ENCODE measurements at regions of chr5 and their contacts with region 1.

Region 1: DNA sequence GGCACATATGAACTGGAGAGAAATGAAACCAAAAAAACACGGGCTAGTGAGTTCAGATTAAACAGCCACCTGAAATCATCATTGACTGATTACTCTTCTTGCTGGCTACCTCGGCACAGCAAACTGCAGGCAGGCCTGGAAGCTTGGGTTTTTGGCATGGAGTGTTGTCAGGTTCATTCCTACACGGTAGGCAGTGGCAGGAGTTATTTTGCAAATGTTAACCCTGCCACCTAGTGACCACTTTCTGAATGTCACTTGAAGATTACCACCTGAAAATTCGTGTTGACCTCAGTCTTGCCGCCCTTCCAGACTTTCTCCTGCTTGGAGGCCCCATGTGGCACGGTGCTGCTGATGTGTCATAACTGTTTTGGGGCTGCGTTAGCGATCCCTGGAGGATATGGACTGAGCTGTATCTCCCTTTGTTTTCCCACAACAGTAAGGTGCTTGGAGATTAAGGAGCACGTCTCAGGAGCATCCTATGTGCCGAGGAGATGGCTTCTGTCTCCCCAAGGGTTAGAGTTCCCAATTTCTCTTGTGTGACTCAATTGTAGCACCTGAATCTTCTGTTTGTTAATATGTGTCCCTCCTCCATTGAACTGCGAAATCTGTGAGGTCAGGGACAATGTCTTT is 12.7 kb upstream of the CD180 start:
- DNase-seq: peak in 6 of 10 donors; percentile 51 to 79 (median 58)
- H3K4me3 ChIP-seq: peak overlapping the region in 9 of 59 donors; percentile 1 to 31 (median 11)
- H3K27ac ChIP-seq: no peak overlapping the region
- H3K27me3 ChIP-seq: no peaks in the 10 kb centered on the region
- CTCF ChIP-seq: peak; percentile 73 to 99 (median 91)

Region 2: DNA sequence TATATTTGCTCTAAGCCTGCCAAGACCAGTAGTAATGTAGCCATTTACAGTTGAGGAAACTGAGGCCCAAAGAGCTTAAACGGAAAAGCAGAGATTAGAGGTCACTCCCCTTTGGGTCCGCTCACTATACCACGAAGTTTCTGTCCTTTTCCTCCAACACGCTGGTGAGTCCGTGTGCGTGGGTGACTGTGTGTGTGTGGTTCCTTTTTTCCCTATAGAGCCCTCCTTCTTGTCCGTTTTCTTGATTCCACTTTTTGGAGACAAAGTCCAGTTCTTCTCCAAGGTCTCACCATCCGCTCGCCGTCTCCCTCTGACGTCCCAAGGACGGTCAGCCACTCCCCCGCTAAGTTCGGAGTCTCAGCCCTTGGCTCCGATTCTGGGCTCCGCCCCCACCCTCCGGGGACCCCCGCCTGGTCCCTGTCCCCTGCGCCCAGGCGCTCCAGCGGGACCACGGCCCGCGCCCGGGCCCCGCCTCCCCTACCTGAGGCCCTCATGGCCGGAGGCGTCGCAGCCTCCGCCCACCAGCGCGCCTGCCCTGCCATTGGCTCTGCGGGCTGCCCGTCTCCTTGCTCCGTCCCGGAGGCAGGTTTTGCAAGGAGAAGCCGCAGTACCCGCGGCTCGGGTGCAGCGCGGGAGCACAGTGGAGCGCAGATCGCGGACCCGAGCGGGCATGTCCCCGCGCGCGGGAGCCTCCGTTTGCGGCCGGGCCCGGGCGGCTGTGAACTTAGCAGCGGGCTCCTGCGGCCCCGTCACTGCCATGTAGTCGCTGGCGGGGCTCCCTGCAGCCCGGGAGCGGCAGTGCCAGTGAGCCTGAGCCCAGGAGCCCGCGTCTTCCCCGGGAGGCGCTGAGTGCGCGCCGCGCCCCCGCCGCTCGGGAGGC is 613.3 kb before region 1 on chr5 and contains the start of gene MAST4:
- intact Hi-C with region 1: loop called in 1 of 2 experiments (anchors 5 kb)
- DNase-seq: peak; percentile 44 to 93 (median 82)
- H3K4me3 ChIP-seq: peak within 1 kb of the TSS; percentile 48 to 84 (median 76)
- H3K27ac ChIP-seq: peak within 1 kb of the TSS in 48 of 59 donors; percentile 24 to 90 (median 73)
- H3K27me3 ChIP-seq: peaks cover 0 to 13% (median 0%) of the 10 kb centered on the region in 45 donors
- CTCF ChIP-seq: peak in 1 of 56 donors; percentile 3
- total RNA-seq, gene MAST4: 32.2 to 102 (median 69.2) TPM

Region 3: GRCh38 chr5:66807743-66808142 is 401.5 kb before region 1 on chr5:
- intact Hi-C with region 1: loop called (anchors 2 to 10 kb)
- DNase-seq: peak in 4 of 10 donors; percentile 10 to 70 (median 36)
- H3K4me3 ChIP-seq: peak overlapping the region in 1 of 59 donors; percentile 11
- H3K27ac ChIP-seq: peak overlapping the region in 7 of 59 donors; percentile 3 to 62 (median 10)
- H3K27me3 ChIP-seq: no peaks in the 10 kb centered on the region
- CTCF ChIP-seq: peak; percentile 19 to 77 (median 59)

Region 4: DNA sequence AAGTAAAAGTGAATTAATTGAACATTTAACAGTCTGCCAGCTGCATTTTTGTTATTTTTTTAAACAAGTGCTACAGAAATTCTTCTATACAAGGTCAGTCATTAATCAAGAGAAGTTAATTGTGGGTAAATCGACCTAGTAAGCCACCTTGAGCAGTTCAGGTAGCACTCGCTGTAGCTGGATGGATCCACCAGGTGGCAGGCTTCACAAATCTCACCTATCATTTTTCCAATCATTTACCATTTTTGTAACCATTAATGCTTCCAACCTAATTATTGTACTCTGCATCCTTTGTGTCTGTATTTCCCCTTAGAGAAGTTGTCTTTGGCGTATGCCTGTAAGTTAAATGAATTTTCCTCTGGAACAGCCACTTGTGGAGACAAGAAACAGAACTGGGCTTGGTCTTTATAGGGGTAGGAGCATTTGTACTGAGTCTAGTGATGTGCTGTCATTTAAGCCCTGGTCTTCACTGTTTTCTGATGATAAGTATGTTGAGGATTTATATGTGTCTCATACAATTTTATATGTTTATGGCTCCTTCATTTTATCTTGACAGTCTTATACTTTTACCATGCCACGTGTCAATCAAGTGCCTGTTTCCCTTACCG is 52.2 kb before region 1 on chr5:
- intact Hi-C with region 1: loop called (anchors 1 to 2 kb)
- DNase-seq: peak in 1 of 10 donors; percentile 27
- H3K4me3 ChIP-seq: no peak overlapping the region
- H3K27ac ChIP-seq: no peak overlapping the region
- H3K27me3 ChIP-seq: no peaks in the 10 kb centered on the region
- CTCF ChIP-seq: peak; percentile 56 to 92 (median 85)

Region 5: GRCh38 chr5:67165526-67166459 is 43.5 kb before region 1 on chr5:
- intact Hi-C with region 1: loop called (anchors 2 kb)
- DNase-seq: peak; percentile 52 to 85 (median 76)
- H3K4me3 ChIP-seq: peak overlapping the region in 51 of 59 donors; percentile 4 to 59 (median 38)
- H3K27ac ChIP-seq: peak overlapping the region in 56 of 59 donors; percentile 42 to 92 (median 78)
- H3K27me3 ChIP-seq: no peaks in the 10 kb centered on the region
- CTCF ChIP-seq: peak; percentile 35 to 86 (median 74)

Region 6: DNA sequence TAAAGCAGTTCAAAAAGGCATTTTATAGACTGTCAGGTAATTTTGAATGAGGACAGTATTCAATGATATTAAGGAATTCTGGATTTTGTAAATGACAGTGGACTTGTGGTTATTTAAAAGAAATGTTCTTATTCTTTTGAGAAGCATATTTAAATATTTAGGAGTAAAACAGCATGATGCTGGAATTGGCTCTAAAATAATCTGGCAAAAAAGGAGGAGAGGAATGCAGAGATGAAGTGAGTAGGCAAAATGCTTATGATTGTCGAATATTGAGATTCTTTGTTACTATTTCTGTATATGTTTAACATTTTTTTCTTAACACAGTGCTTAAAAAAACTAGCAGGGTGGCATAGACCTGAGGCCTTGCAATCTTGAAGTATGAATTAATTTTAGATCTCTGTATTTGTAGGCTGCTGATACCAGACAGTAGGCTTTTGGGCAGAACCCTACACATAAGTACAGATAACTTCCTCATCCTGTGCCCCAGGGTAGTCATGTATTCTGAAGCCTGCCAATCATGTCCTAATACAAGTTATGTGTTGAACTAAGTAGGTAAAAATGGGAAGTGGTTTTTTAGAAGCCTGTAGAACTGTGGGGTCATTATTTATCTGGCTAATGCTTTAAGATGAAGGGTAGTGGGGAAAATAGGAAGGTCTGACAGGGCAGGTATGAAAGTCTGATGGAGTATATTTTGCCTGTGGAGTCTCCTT is 22.1 kb before region 1 on chr5:
- intact Hi-C with region 1: no loop called
- DNase-seq: no peak
- H3K4me3 ChIP-seq: no peak overlapping the region
- H3K27ac ChIP-seq: peak overlapping the region in 9 of 59 donors; percentile 4 to 46 (median 15)
- H3K27me3 ChIP-seq: no peaks in the 10 kb centered on the region
- CTCF ChIP-seq: no peak

Measured in dorsolateral prefrontal cortex (tissue), 120 donors.